ENCODE measurements at regions of chrX and their contacts with region 1.

Region 1: GRCh38 chrX:78019586-78020483 is 50.4 kb upstream of the PGAM4 start:
- DNase-seq: peak in 2 of 6 donors; percentile 2 to 11
- ATAC-seq: peak; percentile 79 to 89 (median 84)
- H3K4me3 ChIP-seq: no peak overlapping the region
- H3K27ac ChIP-seq: peak overlapping the region in 2 of 4 donors; percentile 65 to 70
- H3K4me1 ChIP-seq: peaks cover 0 to 4% (median 0%) of the 10 kb centered on the region in 3 donors
- H3K27me3 ChIP-seq: peaks cover 0 to 8% (median 0%) of the 10 kb centered on the region in 4 donors
- CTCF ChIP-seq: no peak

Region 2: DNA sequence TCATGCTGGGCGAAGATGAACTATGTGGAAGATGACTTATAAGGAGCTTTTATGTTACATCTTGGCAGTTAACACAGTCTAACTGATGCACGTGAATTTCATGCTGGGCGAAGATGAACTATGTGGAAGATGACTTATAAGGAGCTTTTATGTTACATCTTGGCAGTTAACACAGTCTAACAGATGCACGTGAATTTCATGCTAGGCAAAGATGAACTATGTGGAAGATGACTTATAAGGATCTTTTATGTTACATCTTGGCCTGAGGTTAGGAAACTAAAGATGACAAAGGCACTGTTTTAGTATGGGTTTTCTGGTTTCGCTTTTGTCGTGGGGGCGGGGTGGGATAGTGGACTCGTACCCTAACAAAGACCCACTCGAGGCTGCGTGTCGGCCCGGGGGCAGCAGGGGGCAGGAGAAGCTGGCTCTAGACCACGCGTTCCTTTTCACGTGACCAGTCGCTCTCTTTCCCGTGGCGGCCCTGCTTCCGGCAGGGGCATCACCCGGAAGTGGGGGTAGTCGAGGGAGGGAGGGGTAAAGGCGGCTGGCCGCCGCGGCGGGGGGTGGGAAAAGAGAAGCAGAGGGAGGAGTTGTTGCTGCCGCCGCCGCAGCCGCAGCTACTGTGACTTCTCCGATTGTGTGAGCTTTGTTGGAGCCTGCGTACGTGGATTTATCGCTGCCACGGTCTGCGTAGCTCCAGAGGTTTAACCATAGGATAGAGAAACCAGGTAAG is 109.6 kb before region 1 on chrX and contains the start of gene ATP7A:
- intact Hi-C with region 1: loop called in 1 of 3 experiments (anchors 10 kb)
- DNase-seq: peak; percentile 87 to 93 (median 90)
- ATAC-seq: peak; percentile 97 to 98 (median 98)
- H3K4me3 ChIP-seq: peak within 1 kb of the TSS in 3 of 4 donors; percentile 24 to 46 (median 38)
- H3K27ac ChIP-seq: peak within 1 kb of the TSS; percentile 0 to 84 (median 62)
- H3K4me1 ChIP-seq: peaks cover 0 to 3% (median 0%) of the 10 kb centered on the region in 3 donors
- H3K27me3 ChIP-seq: no peaks in the 10 kb centered on the region
- CTCF ChIP-seq: peak in 3 of 4 donors; percentile 21 to 30 (median 30)
- total RNA-seq, gene ATP7A: 3.9 to 7.8 (median 4.7) TPM